A549 (cell line): ENCODE measurements at regions of chr17 and their contacts with region 1.

Region 1: GRCh38 chr17:63714547-63715277 is 14.8 kb upstream of the LIMD2 start:
- DNase-seq: no peak
- ATAC-seq: peak; percentile 39 to 54; a peak in 3 of 6 replicates
- H3K4me3 ChIP-seq: no peak overlapping the region
- H3K27ac ChIP-seq: no peak overlapping the region
- H3K4me1 ChIP-seq: no peaks in the 10 kb centered on the region
- CTCF ChIP-seq: no peak
- EP300 ChIP-seq: no peak
- POLR2A ChIP-seq: no peak
- RAD21 ChIP-seq: no peak

Region 2: DNA sequence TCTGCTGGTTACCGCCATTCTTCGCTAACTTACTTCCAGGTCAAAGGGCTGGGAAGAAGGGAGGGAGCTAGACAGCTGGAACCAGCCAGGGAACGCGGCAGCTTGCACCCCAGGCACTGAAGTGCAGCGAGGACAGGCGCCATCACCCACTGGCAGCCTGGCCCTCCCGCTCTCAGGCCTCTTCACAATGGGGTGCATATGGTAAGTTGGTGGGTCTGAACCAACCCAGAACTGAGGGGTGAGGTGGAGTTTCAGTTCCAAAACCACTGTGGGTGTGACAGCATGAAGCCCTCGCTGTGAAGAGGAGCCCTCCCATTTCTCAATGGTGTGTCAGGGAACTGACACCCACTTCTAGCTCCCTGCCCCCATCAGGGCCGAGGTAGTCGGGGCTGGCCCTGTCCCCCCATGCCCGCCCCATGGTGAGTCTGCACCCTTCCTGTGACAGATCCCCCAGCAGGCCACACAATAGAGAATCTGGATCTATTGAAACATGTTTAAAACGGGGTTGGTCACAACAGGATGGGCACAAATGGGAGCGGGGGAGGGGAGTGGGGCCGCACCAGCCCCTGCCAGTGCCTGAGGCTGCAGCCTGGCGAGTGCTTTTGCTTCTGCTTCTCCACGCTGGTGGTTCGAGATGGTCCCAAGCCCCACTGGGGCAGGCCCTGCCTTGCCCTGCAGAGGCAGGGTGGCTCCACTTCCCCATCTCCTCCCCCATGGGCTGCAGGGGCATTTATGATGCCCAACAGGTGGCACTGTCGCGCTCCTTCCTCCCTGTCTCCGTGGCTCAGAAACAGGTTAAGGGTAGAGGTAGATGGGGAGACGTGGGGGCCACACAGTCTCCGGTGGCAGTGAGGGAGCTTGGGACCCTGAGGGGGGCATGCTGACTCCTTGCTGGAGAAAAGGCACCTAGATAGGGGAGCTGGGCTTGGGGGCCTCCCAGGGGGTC is 17.1 kb before region 1 on chr17:
- CTCF ChIA-PET with region 1: interaction called, 17 read pairs
- POLR2A ChIA-PET with region 1: no interaction called
- DNase-seq: peak; percentile 69 to 78
- ATAC-seq: peak; percentile 31 to 69
- H3K4me3 ChIP-seq: no peak overlapping the region
- H3K27ac ChIP-seq: no peak overlapping the region
- H3K4me1 ChIP-seq: 0 out of 3 replicates have a peak, but pooled peaks cover 6% of the 10 kb centered on the region
- CTCF ChIP-seq: peak; percentile 56
- EP300 ChIP-seq: no peak
- POLR2A ChIP-seq: no peak
- RAD21 ChIP-seq: peak; percentile 31 to 40; a peak in 4 of 5 replicates

Region 3: DNA sequence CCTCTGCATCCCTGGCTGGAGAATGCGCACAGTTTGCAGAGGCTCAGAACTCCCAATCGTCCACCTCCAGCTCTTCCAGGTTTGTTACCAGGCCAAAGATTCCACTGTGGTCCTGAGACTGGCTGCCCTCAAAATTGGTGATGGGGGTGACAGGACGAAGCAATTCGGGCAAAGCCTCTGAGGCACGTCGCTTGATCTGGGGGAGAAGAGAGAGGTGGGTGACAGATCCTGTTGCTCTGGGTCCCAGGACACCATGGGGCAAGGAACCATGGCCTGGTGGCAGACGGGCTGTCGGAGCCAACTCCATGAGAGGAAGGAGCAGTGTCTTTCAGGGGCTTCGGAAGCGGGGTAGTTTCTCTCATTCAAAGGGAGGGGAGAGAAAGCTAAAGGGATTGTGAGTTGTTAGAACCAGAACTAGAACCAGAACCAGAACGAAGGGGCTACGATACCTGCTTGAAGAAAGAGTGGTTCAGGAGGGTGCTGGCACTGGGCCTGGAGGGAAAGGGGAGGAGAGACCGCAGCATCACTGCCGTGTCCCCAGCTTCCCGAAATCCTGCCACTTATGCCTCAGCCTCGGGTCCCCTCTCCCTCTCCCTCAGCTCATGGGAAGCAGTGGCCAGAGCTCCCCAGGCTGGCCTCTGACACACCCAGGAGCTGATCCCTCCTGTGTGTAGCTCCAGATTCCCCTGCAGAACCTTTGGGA is 11.0 kb before region 1 on chr17:
- CTCF ChIA-PET with region 1: interaction called, 17 read pairs
- POLR2A ChIA-PET with region 1: no interaction called
- DNase-seq: no peak
- ATAC-seq: no peak
- H3K4me3 ChIP-seq: no peak overlapping the region
- H3K27ac ChIP-seq: no peak overlapping the region
- H3K4me1 ChIP-seq: 0 out of 3 replicates have a peak, but pooled peaks cover 6% of the 10 kb centered on the region
- CTCF ChIP-seq: no peak
- EP300 ChIP-seq: no peak
- POLR2A ChIP-seq: no peak
- RAD21 ChIP-seq: no peak

Region 4: GRCh38 chr17:64056269-64057005 is 341.7 kb after region 1 on chr17:
- CTCF ChIA-PET with region 1: no interaction called
- POLR2A ChIA-PET with region 1: no interaction called
- DNase-seq: no peak
- ATAC-seq: peak in 1 of 2 experiments; percentile 28; a peak in 3 of 6 replicates
- H3K4me3 ChIP-seq: no peak overlapping the region
- H3K27ac ChIP-seq: peak overlapping the region in 1 of 2 experiments; percentile 11; a peak in 1 of 6 replicates
- H3K4me1 ChIP-seq: peaks cover 29% of the 10 kb centered on the region
- CTCF ChIP-seq: no peak
- EP300 ChIP-seq: no peak
- POLR2A ChIP-seq: no peak
- RAD21 ChIP-seq: no peak